Posterior cingulate gyrus (tissue), 11 donors: ENCODE measurements at regions of chr19 and their contacts with region 1.

Region 1: DNA sequence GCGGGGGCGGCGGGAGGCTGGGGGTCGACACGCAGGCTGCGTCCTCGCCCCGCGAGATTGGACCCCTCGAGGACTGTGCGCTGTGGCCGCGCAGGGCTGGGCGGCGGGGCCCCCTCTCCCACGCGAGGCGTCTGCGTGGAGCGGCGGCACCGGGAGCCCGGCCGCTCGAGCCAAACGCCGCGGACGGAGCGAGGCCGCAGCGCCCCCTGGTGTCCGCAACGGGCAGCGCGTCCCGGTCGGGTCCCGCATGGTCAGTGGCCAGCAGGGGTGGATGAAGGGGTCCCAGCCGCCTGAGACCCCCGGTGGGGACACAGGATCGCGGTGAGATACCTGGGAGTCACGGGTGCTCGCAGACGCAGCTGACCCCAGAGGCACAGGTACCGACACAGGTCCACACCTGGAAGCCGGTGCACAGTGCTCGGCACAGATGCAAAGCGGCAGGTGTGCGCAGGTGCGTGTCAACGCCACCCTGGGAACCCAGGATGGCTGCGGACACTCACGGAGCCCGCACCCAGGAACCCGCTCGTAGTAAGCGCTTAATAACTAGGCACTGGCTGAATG is 2.1 kb upstream of the CIRBP start:
- DNase-seq: peak in 9 of 10 donors; percentile 61 to 96 (median 77)

Region 2: GRCh38 chr19:1205114-1206062 is 61.6 kb before region 1 on chr19 and contains the start of gene STK11:
- intact Hi-C with region 1: no loop called
- DNase-seq: peak; percentile 98 to 100 (median 99)

Region 3: GRCh38 chr19:1249298-1249989 is 17.6 kb before region 1 on chr19:
- intact Hi-C with region 1: loop called (anchors 1 kb)
- DNase-seq: peak; percentile 71 to 99 (median 87)